A673 (cell line): ENCODE measurements at regions of chr4 and their contacts with region 1.

Region 1: GRCh38 chr4:123168812-123169211 is 227.8 kb upstream of the SPRY1 start:
- DNase-seq: no peak
- H3K4me3 ChIP-seq: no peak overlapping the region
- H3K27ac ChIP-seq: no peak overlapping the region
- H3K4me1 ChIP-seq: peaks cover 3% of the 10 kb centered on the region
- H3K27me3 ChIP-seq: no peaks in the 10 kb centered on the region
- CTCF ChIP-seq: no peak

Region 2: DNA sequence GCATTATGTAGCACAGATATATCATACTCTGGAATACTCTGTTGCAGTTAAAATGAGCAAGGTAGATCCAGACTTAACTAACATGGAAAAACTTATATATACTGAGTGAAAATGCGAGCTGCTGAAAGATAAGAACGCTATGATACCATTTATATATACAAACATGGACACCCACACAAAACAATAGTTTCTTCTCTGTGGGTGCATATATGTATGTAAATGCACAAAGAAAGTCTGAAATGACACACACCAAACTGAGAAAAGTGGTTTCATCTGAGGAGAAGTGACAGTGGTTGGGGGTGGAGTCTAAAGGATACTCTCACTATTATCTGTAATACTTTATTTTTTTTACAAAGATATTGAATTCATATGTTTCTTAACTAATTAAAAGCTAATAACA is 354.4 kb before region 1 on chr4:
- CTCF ChIA-PET with region 1: interaction called, 11 read pairs
- POLR2A ChIA-PET with region 1: no interaction called
- intact Hi-C with region 1: no loop called
- DNase-seq: no peak
- H3K4me3 ChIP-seq: no peak overlapping the region
- H3K27ac ChIP-seq: no peak overlapping the region
- H3K4me1 ChIP-seq: no peaks in the 10 kb centered on the region
- H3K27me3 ChIP-seq: no peaks in the 10 kb centered on the region
- CTCF ChIP-seq: no peak